ENCODE measurements at regions of chr2 and their contacts with region 1.

Region 1: DNA sequence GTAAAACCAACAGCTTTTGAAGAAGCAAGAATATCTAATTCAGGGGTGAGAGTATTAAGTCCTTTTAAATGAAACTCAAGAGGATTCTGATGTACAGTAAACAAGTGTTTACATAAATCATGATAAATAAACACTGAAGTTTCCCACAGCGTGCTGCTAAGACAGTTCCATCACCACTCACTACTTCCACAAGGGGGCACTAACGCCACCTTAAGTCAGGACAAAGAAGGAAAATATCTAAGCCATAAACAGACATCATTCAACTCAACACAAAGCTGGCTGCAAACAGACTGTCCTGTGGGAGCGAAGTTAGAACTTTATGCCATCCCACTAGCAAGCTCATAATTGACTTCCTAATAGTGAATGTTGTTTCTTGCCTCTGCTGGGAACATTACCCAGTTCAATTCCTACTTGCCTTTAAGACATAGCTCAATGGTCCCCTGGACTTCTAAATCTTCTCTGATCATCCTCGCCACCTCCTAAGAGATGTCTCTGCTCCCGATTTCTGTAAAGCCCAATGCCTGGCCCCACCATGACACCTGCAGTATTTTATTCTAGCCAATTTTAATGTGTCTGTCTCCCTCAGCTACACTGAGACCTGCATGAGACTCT is 36.5 kb downstream of the MRPL44 start:
- DNase-seq: peak; percentile 21 to 78 (median 64)
- ATAC-seq: peak; percentile 64
- H3K4me3 ChIP-seq: no peak overlapping the region
- H3K4me3 Mint-ChIP-seq: no peak overlapping the region
- H3K27ac ChIP-seq: no peak overlapping the region
- H3K27ac Mint-ChIP-seq: no peak overlapping the region
- H3K4me1 ChIP-seq: no peaks in the 10 kb centered on the region
- H3K4me1 Mint-ChIP-seq: no peaks in the 10 kb centered on the region
- H3K27me3 ChIP-seq: no peaks in the 10 kb centered on the region
- H3K27me3 Mint-ChIP-seq: no peaks in the 10 kb centered on the region
- CTCF ChIP-seq: peak; percentile 82

Region 2: DNA sequence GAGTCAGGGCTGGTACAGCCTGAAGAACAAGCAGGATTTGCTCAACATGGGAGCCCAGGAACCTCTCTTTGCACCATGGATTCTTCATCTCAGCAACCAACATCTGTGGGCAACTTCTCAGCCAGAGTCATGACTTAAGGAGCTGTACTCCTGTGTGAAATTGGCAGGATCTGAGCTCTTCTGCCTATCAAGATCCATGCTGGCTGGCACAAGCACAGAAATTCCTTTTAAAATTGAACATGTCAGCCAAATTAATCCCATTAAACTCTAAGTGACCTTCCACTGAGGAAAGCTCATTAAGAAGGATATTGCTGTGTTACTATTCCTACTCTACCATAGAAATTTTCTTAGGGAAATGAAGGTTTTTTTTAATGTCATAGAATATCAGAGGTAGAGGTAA is 281.1 kb before region 1 on chr2:
- CTCF ChIA-PET with region 1: no interaction called
- POLR2A ChIA-PET with region 1: no interaction called
- intact Hi-C with region 1: no loop called
- DNase-seq: no peak
- ATAC-seq: no peak
- H3K4me3 ChIP-seq: no peak overlapping the region
- H3K4me3 Mint-ChIP-seq: no peak overlapping the region
- H3K27ac ChIP-seq: no peak overlapping the region
- H3K27ac Mint-ChIP-seq: no peak overlapping the region
- H3K4me1 ChIP-seq: no peaks in the 10 kb centered on the region
- H3K4me1 Mint-ChIP-seq: no peaks in the 10 kb centered on the region
- H3K27me3 ChIP-seq: no peaks in the 10 kb centered on the region
- H3K27me3 Mint-ChIP-seq: peaks cover 3% of the 10 kb centered on the region
- CTCF ChIP-seq: no peak

Region 3: GRCh38 chr2:223822818-223823217 is 170.9 kb before region 1 on chr2:
- CTCF ChIA-PET with region 1: no interaction called
- POLR2A ChIA-PET with region 1: no interaction called
- intact Hi-C with region 1: no loop called
- DNase-seq: no peak
- ATAC-seq: no peak
- H3K4me3 ChIP-seq: no peak overlapping the region
- H3K4me3 Mint-ChIP-seq: no peak overlapping the region
- H3K27ac ChIP-seq: no peak overlapping the region
- H3K27ac Mint-ChIP-seq: no peak overlapping the region
- H3K4me1 ChIP-seq: no peaks in the 10 kb centered on the region
- H3K4me1 Mint-ChIP-seq: no peaks in the 10 kb centered on the region
- H3K27me3 ChIP-seq: no peaks in the 10 kb centered on the region
- H3K27me3 Mint-ChIP-seq: no peaks in the 10 kb centered on the region
- CTCF ChIP-seq: no peak

Region 4: GRCh38 chr2:223970343-223971128 is 23.2 kb before region 1 on chr2:
- CTCF ChIA-PET with region 1: interaction called, 95 read pairs
- POLR2A ChIA-PET with region 1: interaction called, 3 read pairs
- intact Hi-C with region 1: loop called (anchors 1 kb)
- DNase-seq: peak; percentile 16 to 75 (median 55)
- ATAC-seq: peak; percentile 72
- H3K4me3 ChIP-seq: no peak overlapping the region
- H3K4me3 Mint-ChIP-seq: no peak overlapping the region
- H3K27ac ChIP-seq: no peak overlapping the region
- H3K27ac Mint-ChIP-seq: no peak overlapping the region
- H3K4me1 ChIP-seq: no peaks in the 10 kb centered on the region
- H3K4me1 Mint-ChIP-seq: peaks cover 4% of the 10 kb centered on the region
- H3K27me3 ChIP-seq: no peaks in the 10 kb centered on the region
- H3K27me3 Mint-ChIP-seq: no peaks in the 10 kb centered on the region
- CTCF ChIP-seq: peak; percentile 96

Region 5: DNA sequence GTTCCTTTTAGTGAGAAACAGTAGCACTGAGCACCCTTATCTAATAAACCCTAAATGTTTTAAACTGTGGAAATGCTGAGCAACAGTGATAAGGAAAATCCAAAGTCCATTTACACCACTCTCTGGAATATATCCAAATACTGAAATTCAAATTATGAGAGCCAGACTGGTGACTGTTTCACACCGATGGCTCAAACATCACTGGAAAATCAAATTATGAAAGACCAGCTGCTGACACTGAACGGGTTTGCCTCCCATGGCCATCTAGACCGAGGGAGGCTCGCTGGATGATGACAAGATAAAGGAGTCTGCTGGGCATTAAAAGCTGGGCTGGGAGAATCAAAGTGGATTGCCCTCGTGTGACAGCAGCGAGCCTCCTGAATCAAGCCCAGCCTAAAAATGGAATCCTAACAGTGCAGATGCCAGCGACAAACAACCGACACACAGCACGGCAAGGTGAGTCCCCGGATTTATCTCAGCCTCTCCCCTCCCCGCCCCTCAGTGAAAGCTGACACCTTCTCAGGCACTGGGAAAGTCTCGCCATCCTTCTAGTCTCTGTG is 15.1 kb after region 1 on chr2:
- CTCF ChIA-PET with region 1: interaction called, 48 read pairs
- POLR2A ChIA-PET with region 1: no interaction called
- intact Hi-C with region 1: no loop called
- DNase-seq: no peak
- ATAC-seq: no peak
- H3K4me3 ChIP-seq: no peak overlapping the region
- H3K4me3 Mint-ChIP-seq: no peak overlapping the region
- H3K27ac ChIP-seq: no peak overlapping the region
- H3K27ac Mint-ChIP-seq: no peak overlapping the region
- H3K4me1 ChIP-seq: no peaks in the 10 kb centered on the region
- H3K4me1 Mint-ChIP-seq: peaks cover 2% of the 10 kb centered on the region
- H3K27me3 ChIP-seq: no peaks in the 10 kb centered on the region
- H3K27me3 Mint-ChIP-seq: no peaks in the 10 kb centered on the region
- CTCF ChIP-seq: no peak

Region 6: DNA sequence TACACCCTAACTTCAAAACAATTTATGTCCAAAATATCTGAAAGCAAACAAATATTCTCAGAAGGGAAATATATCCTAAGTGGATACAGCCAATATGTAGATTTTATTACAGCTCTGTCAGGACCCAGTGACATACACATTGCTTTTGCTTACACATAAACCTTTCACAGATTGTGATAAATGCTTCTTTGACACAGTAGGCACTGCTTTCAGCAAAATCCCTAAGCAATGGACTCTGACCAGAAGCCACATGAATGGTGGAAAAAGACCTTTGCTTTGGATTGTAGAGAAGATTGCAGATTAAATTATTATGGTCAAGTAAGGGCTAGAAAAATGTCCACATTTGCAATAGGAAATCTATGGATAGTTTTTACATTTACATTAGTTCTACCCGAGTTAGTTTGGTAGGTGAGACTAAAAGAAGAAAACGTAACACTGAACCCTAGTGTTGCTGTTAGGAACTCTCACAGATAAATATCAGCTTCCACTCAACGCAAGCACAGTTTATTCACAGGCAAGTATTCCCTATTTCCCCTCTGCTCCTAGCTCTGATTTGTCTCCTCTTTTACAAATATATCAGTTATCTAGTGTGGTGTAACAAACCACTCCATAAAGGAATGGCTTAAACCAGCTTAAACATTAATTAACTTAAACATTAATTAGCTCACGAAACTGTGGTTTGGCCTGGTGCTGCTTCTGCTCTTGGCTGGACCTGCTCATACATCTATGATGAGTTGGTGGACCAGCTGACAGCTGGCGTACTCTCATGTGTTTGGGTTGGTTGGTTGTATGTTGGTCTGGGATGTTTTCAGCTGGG is 69.0 kb after region 1 on chr2:
- CTCF ChIA-PET with region 1: interaction called, 42 read pairs
- POLR2A ChIA-PET with region 1: no interaction called
- intact Hi-C with region 1: loop called (anchors 1 kb)
- DNase-seq: peak in 1 of 9 experiments; percentile 14
- ATAC-seq: no peak
- H3K4me3 ChIP-seq: no peak overlapping the region
- H3K4me3 Mint-ChIP-seq: no peak overlapping the region
- H3K27ac ChIP-seq: no peak overlapping the region
- H3K27ac Mint-ChIP-seq: no peak overlapping the region
- H3K4me1 ChIP-seq: no peaks in the 10 kb centered on the region
- H3K4me1 Mint-ChIP-seq: no peaks in the 10 kb centered on the region
- H3K27me3 ChIP-seq: no peaks in the 10 kb centered on the region
- H3K27me3 Mint-ChIP-seq: peaks cover 2% of the 10 kb centered on the region
- CTCF ChIP-seq: no peak

Region 7: DNA sequence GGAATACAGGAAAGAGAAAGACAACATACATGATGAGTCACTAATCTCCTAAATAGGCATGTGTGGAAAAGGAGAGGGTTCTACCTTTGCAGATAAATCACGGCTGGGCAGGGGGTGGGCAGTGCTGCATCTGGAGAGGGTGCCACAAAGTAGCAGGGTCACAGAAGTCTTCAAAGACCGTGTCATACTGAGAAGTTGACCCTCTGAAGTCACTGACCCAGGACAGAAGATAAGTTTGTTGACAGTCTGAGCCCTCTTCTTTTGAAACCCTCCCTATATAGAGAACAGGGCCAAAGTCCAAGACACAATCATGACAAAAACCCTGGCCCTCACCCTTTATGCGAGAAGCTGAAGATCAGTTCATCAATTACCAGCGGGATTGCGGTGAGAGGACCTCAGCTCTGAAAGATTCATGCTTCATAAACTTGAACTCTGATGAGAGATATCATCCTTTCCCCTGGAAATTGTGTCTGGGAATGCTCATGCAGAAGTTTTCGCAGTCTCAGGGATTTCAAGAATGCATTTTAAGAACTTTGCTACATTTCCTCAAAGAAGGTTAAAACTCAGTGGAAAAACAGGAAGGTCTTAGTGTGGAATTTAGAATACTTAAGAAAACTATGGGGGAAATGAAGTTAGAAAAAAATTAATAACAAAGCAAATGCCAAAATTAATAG is 278.6 kb after region 1 on chr2:
- CTCF ChIA-PET with region 1: interaction called, 15 read pairs
- POLR2A ChIA-PET with region 1: no interaction called
- intact Hi-C with region 1: no loop called
- DNase-seq: no peak
- ATAC-seq: no peak
- H3K4me3 ChIP-seq: no peak overlapping the region
- H3K4me3 Mint-ChIP-seq: no peak overlapping the region
- H3K27ac ChIP-seq: no peak overlapping the region
- H3K27ac Mint-ChIP-seq: no peak overlapping the region
- H3K4me1 ChIP-seq: no peaks in the 10 kb centered on the region
- H3K4me1 Mint-ChIP-seq: no peaks in the 10 kb centered on the region
- H3K27me3 ChIP-seq: no peaks in the 10 kb centered on the region
- H3K27me3 Mint-ChIP-seq: peaks cover 1% of the 10 kb centered on the region
- CTCF ChIP-seq: no peak

Region 8: DNA sequence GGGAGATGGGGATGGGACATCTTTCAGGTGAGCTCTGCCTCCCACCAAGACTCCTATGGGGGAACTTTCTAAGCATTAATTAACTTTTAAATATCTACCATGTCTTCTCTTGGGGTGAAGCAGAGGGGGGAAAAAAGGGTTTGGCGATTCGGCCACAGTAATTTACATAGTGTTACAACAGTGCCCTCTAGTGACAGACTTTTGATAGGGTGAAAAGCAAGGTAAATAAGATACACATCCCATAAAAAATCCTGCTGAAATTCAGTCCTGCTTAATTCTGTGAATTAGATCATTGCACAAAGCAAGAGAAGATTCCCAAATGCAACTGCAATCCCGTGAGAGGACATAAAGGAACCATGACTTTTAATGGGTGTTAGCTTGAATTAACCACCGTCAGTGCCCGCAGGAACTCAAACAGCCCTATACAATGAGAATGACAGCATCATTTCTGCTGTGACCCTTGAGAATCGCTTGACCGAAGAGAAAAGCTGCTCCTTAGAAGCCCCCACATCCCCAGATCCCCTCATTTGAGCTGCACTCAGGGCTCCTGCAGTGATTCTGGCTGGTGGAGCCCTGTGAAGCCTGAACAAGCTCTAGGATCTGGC is 375.4 kb after region 1 on chr2:
- CTCF ChIA-PET with region 1: interaction called, 15 read pairs
- POLR2A ChIA-PET with region 1: no interaction called
- intact Hi-C with region 1: loop called (anchors 1 to 5 kb)
- DNase-seq: peak in 3 of 9 experiments; percentile 10 to 54 (median 45)
- ATAC-seq: no peak
- H3K4me3 ChIP-seq: no peak overlapping the region
- H3K4me3 Mint-ChIP-seq: no peak overlapping the region
- H3K27ac ChIP-seq: no peak overlapping the region
- H3K27ac Mint-ChIP-seq: no peak overlapping the region
- H3K4me1 ChIP-seq: no peaks in the 10 kb centered on the region
- H3K4me1 Mint-ChIP-seq: no peaks in the 10 kb centered on the region
- H3K27me3 ChIP-seq: no peaks in the 10 kb centered on the region
- H3K27me3 Mint-ChIP-seq: peaks cover 2% of the 10 kb centered on the region
- CTCF ChIP-seq: peak; percentile 76